Left ventricle myocardium superior (tissue), 1 donor: ENCODE measurements at regions of chr10 and their contacts with region 1.

Region 1: GRCh38 chr10:12710594-12711349 is 290.7 kb downstream of the CCDC3 start:
- DNase-seq: peak; percentile 78
- ATAC-seq: peak; percentile 81

Region 2: GRCh38 chr10:12262278-12262981 is 448.3 kb before region 1 on chr10:
- intact Hi-C with region 1: loop called (anchors 2 kb)
- DNase-seq: no peak
- ATAC-seq: no peak